Breast epithelium (tissue), 4 donors: ENCODE measurements at regions of chr11 and their contacts with region 1.

Region 1: DNA sequence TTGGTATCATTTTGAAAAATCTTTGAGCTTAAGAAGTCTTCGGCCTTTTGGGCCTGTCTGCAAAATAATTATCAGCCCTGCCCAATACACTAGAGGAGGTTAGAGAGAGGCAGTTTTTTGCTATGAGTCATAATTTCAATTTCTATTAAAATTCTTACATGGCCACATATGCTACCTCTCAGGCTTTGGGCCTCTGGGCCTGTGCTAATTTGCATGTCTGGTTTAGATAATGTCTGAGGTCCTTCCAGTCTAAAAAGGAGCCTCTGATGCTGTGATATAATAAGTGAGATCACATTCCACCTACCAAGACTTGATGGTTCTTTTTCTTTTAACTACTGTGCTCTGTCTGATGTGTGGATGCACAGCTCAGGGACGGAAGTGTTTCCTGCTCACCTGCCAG is 70.8 kb downstream of the KCNJ1 start:
- DNase-seq: no peak
- H3K4me3 ChIP-seq: no peak overlapping the region
- H3K27ac ChIP-seq: no peak overlapping the region
- H3K4me1 ChIP-seq: no peaks in the 10 kb centered on the region
- H3K27me3 ChIP-seq: no peaks in the 10 kb centered on the region
- CTCF ChIP-seq: no peak
- POLR2A ChIP-seq: no peak

Region 2: GRCh38 chr11:128086794-128087193 is 709.5 kb before region 1 on chr11:
- intact Hi-C with region 1: loop called (anchors 10 kb)
- DNase-seq: no peak
- H3K4me3 ChIP-seq: no peak overlapping the region
- H3K27ac ChIP-seq: no peak overlapping the region
- H3K4me1 ChIP-seq: no peaks in the 10 kb centered on the region
- H3K27me3 ChIP-seq: no peaks in the 10 kb centered on the region
- CTCF ChIP-seq: no peak
- POLR2A ChIP-seq: no peak

Region 3: DNA sequence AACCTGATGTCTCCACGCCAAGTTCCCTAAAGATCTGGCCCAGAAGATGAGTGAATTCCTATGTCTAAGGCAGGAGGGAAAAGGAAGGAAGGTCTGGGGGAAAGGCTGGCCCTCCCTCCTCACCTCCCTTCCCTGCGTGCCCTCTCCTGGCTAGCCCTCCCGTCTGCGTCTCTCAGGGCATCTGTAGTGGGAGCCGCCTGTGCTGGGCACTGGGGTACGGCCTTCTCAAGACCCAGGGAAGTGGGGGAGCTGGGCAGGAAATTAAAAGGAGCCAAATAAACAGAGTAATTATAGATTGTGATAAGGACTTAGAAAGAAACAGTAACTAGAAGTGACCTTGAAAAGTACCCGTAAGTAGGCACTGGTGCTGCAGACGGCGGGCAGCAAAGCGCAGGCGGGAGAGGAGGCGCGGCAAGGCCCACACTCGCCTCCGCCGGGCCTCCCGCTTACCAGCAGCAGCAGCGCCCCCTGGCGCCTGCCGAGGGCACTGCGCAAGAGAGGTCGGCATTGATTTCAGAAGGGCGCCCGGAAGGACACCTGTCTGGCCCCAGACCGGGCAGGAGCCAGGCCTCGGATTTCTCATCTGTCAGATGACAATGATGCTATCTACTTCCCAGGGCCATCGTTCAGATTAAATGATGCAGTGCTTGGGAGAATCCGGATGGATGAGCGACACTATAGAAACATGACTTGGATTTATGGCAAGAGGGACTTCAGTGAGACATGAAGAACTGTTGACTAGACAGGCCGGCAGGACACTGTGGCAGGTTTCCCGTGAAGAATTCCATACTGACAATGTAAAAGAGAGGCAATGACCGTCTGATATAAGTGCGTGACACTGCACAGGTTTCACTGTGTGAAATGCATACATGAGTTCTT is 63.5 kb after region 1 on chr11:
- intact Hi-C with region 1: no loop called
- DNase-seq: no peak
- H3K4me3 ChIP-seq: no peak overlapping the region
- H3K27ac ChIP-seq: no peak overlapping the region
- H3K4me1 ChIP-seq: no peaks in the 10 kb centered on the region
- H3K27me3 ChIP-seq: no peaks in the 10 kb centered on the region
- CTCF ChIP-seq: peak in 1 of 3 donors; percentile 77
- POLR2A ChIP-seq: no peak